ENCODE measurements at regions of chr1 and their contacts with region 1.

Region 1: GRCh38 chr1:59718064-59718988 is 96.4 kb upstream of the HOOK1 start:
- DNase-seq: no peak
- H3K4me3 ChIP-seq: no peak overlapping the region
- H3K27ac ChIP-seq: no peak overlapping the region
- H3K4me1 ChIP-seq: no peaks in the 10 kb centered on the region
- H3K27me3 ChIP-seq: no peaks in the 10 kb centered on the region
- CTCF ChIP-seq: peak; percentile 13 to 37 (median 32)
- EP300 ChIP-seq: no peak
- POLR2A ChIP-seq: no peak

Region 2: GRCh38 chr1:58755468-58755872 is 962.9 kb before region 1 on chr1:
- in situ Hi-C with region 1: loop called in 1 of 4 experiments (anchors 25 kb)
- intact Hi-C with region 1: no loop called
- DNase-seq: peak; percentile 51
- H3K4me3 ChIP-seq: no peak overlapping the region
- H3K27ac ChIP-seq: peak overlapping the region; percentile 45 to 73 (median 66)
- H3K4me1 ChIP-seq: peaks cover 3 to 14% (median 11%) of the 10 kb centered on the region in 4 donors
- H3K27me3 ChIP-seq: no peaks in the 10 kb centered on the region
- CTCF ChIP-seq: no peak
- EP300 ChIP-seq: no peak
- POLR2A ChIP-seq: no peak

Measured in transverse colon (tissue), 4 donors.